Activated CD8-positive, alpha-beta T cell treated with anti-CD3 and anti-CD28 coated beads for 36 hours (primary cell): ENCODE measurements at regions of chr15 and their contacts with region 1.

Region 1: DNA sequence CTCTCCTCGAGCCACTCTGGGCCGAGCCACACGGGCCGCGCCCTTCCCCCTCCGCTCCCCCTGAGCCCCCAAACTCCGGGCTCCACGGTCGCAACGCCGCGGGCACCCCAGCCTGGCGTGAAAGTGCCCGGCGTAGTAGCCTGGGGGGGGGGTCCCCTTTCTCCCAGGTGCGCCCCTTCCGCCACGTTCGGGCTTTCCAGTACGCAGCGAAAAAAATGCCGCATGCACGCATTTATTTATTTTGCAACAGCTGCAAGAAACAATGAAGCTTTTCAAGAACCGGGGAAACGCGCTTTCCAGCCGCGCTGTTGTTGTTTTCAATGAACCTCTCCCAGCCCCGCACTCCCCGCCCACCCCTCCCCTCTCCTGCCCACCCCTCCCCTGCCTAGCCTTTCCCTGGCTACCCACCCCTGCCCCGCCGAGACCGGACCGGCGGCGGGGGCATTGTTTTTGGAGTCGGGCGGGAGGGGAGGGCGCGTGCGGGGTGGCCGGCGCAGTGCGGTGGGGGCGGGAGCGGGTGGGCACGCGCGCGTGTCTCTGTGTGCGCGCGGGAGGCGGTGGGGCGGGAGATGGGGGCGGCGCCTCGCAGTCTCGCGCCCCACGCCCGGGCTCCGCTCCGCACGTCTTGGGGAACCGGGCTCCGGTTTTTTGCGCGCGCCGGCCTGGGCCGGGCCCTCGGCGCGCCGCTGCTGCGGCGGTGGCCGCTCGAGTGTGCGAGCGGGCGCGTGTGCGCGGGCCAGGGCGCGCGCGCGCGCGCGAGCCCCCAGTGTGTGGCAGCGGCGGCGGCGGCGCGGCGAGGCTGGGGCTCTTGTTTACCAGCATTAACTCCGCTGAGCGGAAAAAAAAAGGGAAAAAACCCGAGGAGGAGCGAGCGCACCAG is at the start of gene IGF1R:
- DNase-seq: peak; percentile 83
- ATAC-seq: peak; percentile 74
- H3K4me3 Mint-ChIP-seq: peak within 1 kb of the TSS; percentile 93
- H3K27ac Mint-ChIP-seq: peak within 1 kb of the TSS; percentile 90
- H3K4me1 Mint-ChIP-seq: peaks cover 23% of the 10 kb centered on the region
- H3K27me3 Mint-ChIP-seq: peaks cover 15% of the 10 kb centered on the region
- CTCF ChIP-seq: no peak
- total RNA-seq, gene IGF1R: 22.8 to 24.7 TPM

Region 2: GRCh38 chr15:98635848-98636247 is 12.2 kb before region 1 on chr15:
- CTCF ChIA-PET with region 1: interaction called, 10 read pairs
- POLR2A ChIA-PET with region 1: interaction called, 8 read pairs
- intact Hi-C with region 1: no loop called
- DNase-seq: peak; percentile 24
- ATAC-seq: no peak
- H3K4me3 Mint-ChIP-seq: no peak overlapping the region
- H3K27ac Mint-ChIP-seq: no peak overlapping the region
- H3K4me1 Mint-ChIP-seq: peaks cover 9% of the 10 kb centered on the region
- H3K27me3 Mint-ChIP-seq: peaks cover 1% of the 10 kb centered on the region
- CTCF ChIP-seq: no peak